Activated CD4-positive, alpha-beta T cell treated with anti-CD3 and anti-CD28 coated beads, Interleukin-2, amount 10 ng/mL, durations not matched to agents 24 days and 14 days (primary cell): ENCODE measurements at regions of chr6 and their contacts with region 1.

Region 1: DNA sequence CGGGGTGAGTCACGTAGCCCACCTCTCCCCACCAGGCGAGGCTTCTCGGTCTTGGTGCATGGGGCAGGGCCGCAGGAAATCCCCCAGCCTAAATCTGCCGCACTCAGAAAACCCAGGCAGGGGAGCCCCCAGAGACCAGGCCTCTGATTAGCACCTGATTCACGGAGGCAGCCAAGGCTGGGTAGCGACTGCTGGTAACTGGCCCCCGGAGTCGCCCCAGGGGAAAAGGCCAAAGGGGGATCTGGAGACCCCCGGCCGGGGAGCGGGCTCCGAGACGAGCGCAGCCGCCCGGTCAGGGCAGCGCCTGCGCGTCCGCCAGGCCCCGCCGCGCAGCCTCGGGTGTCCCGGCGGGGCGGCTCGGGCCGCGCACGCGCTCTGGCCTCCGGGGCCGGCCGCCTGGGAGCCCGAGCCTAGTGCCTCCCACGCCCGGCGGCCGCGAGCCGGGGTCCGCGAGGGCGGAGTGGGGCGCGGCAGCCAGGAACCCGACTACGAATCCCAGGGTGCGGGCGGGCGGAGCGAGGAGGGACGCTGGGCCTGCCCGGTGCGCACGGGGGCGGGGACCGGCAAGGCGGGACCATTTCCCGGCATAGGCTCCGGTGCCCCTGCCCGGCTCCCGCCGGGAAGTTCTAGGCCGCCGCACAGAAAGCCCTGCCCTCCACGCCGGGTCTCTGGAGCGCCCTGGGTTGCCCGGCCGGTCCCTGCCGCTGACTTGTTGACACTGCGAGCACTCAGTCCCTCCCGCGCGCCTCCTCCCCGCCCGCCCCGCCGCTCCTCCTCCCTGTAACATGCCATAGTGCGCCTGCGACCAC is at the start of gene DUSP22:
- DNase-seq: peak; percentile 94
- H3K4me3 Mint-ChIP-seq: peak within 1 kb of the TSS; percentile 86
- H3K27ac Mint-ChIP-seq: peak within 1 kb of the TSS; percentile 95
- H3K4me1 Mint-ChIP-seq: peaks cover 45% of the 10 kb centered on the region
- H3K27me3 Mint-ChIP-seq: no peaks in the 10 kb centered on the region
- total RNA-seq, gene DUSP22: 22.5 and 24.0 TPM in 2 replicates

Region 2: DNA sequence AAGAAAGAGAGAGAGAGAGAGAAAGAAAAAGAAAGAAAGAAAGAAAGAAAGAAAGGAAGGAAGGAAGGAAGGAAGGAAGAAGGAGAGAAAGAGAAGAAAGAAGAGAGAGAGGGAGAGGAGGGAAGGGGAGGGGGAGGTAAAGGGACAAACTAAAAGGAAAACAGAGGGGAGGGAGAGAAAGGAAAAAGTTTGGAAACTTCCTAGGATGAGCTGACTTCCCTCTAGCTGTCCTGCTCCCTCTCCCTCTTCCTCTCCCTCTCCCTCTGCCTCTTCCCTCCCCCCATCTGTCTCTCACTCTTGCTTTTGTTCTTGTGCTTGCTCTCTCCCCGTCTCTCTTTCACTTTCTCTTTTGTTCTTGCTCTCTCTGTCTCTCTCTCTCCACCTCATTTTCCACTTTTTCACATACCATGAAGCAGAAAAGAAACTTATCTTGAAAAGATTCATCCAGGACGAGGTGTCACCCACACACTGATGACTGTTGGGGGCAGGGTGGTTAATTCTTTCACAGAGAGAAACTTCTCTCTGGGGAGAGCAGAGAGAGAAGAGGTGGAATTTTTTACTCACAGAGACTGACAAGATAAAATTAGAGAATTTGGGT is 56.0 kb before region 1 on chr6:
- intact Hi-C with region 1: loop called (anchors 2 kb)
- DNase-seq: peak; percentile 87
- H3K4me3 Mint-ChIP-seq: peak overlapping the region; percentile 74
- H3K27ac Mint-ChIP-seq: peak overlapping the region; percentile 85
- H3K4me1 Mint-ChIP-seq: peaks cover 47% of the 10 kb centered on the region
- H3K27me3 Mint-ChIP-seq: no peaks in the 10 kb centered on the region

Region 3: GRCh38 chr6:273551-274058 is 18.3 kb before region 1 on chr6:
- intact Hi-C with region 1: loop called (anchors 2 kb)
- DNase-seq: peak; percentile 38
- H3K4me3 Mint-ChIP-seq: no peak overlapping the region
- H3K27ac Mint-ChIP-seq: no peak overlapping the region
- H3K4me1 Mint-ChIP-seq: peaks cover 15% of the 10 kb centered on the region
- H3K27me3 Mint-ChIP-seq: peaks cover 11% of the 10 kb centered on the region

Region 4: DNA sequence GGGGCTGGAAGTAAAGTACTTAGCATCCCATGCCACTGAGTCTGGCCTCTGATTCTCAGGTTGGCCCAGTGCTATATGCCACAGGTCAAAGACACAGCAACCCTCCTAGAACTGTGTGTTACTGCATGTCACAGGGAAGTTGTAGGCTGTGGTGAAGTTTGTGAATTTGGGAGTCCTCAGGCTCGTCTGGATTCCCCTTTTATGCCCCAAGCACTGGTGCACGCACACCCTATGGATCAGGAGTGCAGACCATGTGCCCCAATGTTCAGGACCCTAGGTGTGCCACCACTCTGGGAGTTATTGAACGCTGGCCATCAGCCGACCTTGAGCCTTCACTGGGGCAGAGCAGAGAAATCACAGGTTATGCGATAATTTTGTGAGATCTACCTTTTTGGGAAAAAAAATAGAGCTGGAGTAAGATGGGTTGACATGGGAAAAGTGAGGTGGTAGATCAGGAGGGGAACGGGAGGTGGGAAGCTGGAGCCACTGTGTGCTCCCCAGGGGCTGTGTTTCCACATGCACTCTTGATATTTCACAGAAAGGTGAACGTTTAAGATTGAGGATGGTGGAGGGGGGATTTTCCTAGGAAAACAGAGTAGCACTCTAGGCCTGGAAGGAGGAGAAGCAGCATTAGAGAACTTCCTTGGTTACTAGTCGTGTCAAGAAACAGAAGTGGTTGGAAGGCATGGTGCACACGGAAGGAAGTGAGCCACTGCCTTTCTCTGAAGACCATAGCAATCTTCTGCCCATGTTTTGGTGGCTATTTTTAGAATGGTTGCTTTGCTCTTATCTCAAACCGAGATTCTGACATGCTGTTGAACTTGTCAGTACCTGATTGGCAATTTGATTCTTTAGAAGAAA is 44.5 kb after region 1 on chr6:
- intact Hi-C with region 1: loop called (anchors 2 kb)
- DNase-seq: peak; percentile 71
- H3K4me3 Mint-ChIP-seq: peak overlapping the region; percentile 65
- H3K27ac Mint-ChIP-seq: peak overlapping the region; percentile 75
- H3K4me1 Mint-ChIP-seq: peaks cover 45% of the 10 kb centered on the region
- H3K27me3 Mint-ChIP-seq: no peaks in the 10 kb centered on the region

Region 5: DNA sequence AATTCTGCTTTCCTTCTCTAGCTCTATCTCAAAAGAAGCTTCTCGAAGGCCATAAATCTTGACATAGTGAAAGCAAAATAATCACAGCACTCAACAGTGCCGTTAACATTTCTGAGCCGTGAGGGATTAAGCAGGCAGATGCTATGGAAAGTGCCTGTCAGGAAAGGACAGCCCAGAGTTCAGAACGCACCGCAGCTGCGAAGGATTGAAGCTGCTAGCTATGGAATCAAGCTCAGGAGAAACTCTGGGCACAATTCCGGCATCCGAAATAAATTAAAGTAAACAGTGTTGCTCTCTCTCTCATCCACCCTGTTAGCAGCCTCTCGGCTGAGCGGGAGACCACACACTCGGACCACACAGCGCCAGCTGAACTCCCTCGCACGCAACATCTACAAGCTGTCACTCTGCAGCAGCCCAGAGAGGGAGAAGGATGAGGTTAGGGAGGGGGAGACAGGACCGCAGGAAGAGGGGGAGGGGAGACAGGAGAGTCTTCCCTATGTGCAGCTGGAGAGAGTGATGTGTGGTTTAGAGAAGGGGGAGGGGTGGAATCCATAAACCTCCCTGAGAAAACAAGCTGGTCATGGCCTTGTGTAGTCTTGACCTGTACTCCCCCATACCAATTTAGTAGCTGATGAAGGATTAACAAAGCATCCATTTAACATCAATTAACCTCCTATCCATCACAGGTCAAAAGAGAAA is 392.0 kb after region 1 on chr6:
- intact Hi-C with region 1: no loop called
- DNase-seq: peak; percentile 66
- H3K4me3 Mint-ChIP-seq: peak overlapping the region; percentile 71
- H3K27ac Mint-ChIP-seq: peak overlapping the region; percentile 77
- H3K4me1 Mint-ChIP-seq: peaks cover 41% of the 10 kb centered on the region
- H3K27me3 Mint-ChIP-seq: no peaks in the 10 kb centered on the region